ENCODE measurements at regions of chr2 and their contacts with region 1.

Region 1: DNA sequence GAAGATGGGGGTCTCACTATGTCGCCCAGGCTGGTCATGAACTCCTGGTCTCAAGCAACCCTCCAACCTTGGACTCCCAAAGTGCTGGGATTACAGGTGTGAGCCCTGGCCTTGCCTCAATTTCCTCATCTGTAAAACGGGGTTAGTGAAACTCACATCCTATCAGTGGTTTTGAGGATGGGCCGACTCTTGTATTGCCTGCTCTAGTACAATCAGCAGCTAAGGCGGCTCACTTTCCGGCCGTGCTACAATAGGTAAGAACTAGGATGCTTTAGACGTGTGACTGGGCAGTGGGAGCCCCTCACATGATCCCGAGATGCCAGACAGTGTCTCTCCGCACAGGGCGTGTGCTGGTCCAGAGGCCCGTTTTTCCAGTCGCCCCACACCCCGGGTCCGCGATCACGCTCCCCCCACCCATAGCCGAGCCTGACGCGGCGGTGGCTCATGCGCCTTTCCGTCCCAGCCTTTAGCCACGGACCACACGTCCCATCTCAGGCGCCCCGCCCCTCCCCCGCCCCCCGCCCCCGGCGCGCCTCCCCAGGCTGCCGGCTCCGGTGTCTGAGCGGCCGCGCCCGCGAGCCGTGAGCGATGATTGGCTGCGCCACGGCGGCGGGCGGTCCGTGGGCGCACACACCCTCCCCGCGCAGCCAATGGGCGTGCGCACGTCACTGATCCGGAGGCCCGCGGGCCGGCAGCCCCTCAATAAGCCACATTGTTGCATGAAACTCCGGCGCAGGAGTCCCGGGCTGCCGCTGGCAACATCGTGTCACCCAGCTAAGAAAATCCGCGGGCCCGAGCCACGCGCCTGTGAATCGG is at the start of gene HK2:
- DNase-seq: peak; percentile 62 to 89 (median 77)
- ATAC-seq: peak; percentile 86 to 87
- H3K4me3 Mint-ChIP-seq: peak within 1 kb of the TSS; percentile 84 to 96 (median 92)
- H3K27ac Mint-ChIP-seq: peak within 1 kb of the TSS; percentile 40 to 95 (median 94)
- H3K4me1 Mint-ChIP-seq: peaks cover 27 to 39% (median 33%) of the 10 kb centered on the region in 4 donors
- H3K27me3 Mint-ChIP-seq: peaks cover 0 to 3% (median 0%) of the 10 kb centered on the region in 5 donors
- polyA plus RNA-seq, gene HK2: 1.2 to 5.7 (median 1.7) TPM

Region 2: GRCh38 chr2:74849228-74849892 is 15.7 kb after region 1 on chr2:
- POLR2A ChIA-PET with region 1: interaction called, 48 read pairs
- DNase-seq: peak; percentile 22 to 84 (median 62)
- ATAC-seq: peak; percentile 87 to 93
- H3K4me3 Mint-ChIP-seq: peak overlapping the region; percentile 61 to 90 (median 86)
- H3K27ac Mint-ChIP-seq: peak overlapping the region; percentile 89 to 100 (median 97)
- H3K4me1 Mint-ChIP-seq: peaks cover 39 to 84% (median 69%) of the 10 kb centered on the region in 4 donors
- H3K27me3 Mint-ChIP-seq: no peaks in the 10 kb centered on the region

Region 3: DNA sequence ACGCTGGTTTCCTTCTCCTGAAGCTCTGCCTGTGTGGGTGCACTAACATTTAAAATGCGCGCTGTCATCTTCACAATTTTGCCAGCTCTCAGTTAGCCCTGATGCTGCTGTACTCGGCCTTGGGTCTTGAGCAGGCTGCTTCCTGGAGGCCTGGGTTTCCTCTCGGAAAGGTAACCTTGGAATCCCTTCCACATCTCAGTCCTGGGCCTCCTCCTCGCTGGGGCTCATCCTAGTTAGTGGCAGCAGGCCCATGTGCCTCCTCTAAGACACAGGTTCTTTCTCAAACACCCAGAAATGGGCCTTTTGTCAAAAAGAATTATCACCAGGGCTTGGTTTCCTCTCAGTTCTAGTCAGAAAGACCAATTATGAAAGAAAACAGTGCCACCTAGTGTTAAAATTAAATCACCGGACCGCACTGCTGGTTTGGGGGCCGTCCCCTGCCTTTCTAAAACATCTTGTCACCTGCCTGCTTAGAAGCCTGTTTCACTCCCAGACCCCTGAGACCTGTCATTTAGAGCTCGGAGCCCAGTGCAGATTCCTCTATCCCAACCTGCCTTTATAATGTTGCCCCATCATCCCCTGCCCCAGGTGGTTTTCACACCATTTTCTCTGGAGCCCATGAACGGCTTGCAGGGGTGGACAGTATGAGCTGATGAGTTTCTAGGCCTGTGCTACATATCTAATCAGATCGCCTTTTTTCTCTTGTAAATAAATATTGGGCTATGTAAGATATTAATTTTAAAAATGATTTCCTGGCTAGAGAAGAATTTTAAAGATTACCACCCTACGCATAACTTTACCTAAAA is 42.7 kb after region 1 on chr2:
- POLR2A ChIA-PET with region 1: interaction called, 10 read pairs
- DNase-seq: peak; percentile 10 to 79 (median 52)
- ATAC-seq: peak; percentile 84 to 89
- H3K4me3 Mint-ChIP-seq: no peak overlapping the region
- H3K27ac Mint-ChIP-seq: peak overlapping the region in 5 of 10 donors; percentile 43 to 87 (median 53)
- H3K4me1 Mint-ChIP-seq: peaks cover 6 to 8% (median 6%) of the 10 kb centered on the region in 4 donors
- H3K27me3 Mint-ChIP-seq: no peaks in the 10 kb centered on the region